Caco-2 (cell line): ENCODE measurements at regions of chr5 and their contacts with region 1.

Region 1: DNA sequence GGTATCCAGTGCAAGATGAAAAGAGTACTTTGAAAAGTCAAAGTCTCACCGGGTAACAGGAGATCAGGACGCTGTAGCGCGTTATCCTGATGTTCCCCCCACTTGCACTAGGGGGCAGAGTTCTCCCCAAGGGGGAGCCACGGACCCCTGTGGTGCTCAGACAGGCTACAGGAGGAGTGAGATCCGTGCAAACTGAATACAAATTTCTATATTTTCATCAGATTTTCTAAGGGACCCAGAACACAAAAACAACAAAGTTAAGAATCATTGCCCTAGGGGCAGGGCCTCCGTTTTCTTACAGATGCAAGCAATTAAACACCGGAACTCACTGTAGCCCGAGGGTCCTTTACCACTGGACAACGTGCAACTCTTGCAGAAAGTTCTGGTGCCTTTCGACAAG is 2.0 kb downstream of the MYO10 start:
- DNase-seq: peak; percentile 77 to 87
- H3K4me3 ChIP-seq: peak overlapping the region; percentile 97
- H3K4me3 Mint-ChIP-seq: peak overlapping the region; percentile 90
- H3K27ac Mint-ChIP-seq: no peak overlapping the region
- H3K4me1 ChIP-seq: peaks cover 28% of the 10 kb centered on the region
- H3K4me1 Mint-ChIP-seq: peaks cover 30% of the 10 kb centered on the region
- H3K27me3 ChIP-seq: no peaks in the 10 kb centered on the region
- H3K27me3 Mint-ChIP-seq: no peaks in the 10 kb centered on the region
- CTCF ChIP-seq: peak; percentile 97 to 98

Region 2: DNA sequence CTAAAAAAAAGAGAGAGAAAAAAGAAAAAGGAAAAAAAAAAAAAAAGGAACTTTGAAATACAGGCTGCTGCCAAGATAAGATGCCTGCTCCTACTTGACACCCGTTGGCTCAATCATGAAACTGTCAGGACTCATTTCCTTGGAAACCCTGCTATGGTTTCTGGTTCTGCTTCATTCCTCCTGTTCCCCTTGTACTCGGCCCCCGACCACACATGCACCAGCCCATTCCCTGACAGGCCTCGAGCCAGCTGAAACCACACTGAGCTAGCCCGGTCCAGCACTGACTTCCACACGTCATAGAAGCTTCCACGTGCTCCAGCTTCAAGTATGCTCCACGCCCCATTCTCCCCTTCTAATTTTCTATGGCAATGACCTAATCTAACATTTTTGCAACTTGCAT is 91.2 kb before region 1 on chr5:
- CTCF ChIA-PET with region 1: interaction called, 3 read pairs
- POLR2A ChIA-PET with region 1: no interaction called
- intact Hi-C with region 1: loop called (anchors 1 kb)
- DNase-seq: no peak
- H3K4me3 ChIP-seq: no peak overlapping the region
- H3K4me3 Mint-ChIP-seq: no peak overlapping the region
- H3K27ac Mint-ChIP-seq: no peak overlapping the region
- H3K4me1 ChIP-seq: no peaks in the 10 kb centered on the region
- H3K4me1 Mint-ChIP-seq: peaks cover 17% of the 10 kb centered on the region
- H3K27me3 ChIP-seq: no peaks in the 10 kb centered on the region
- H3K27me3 Mint-ChIP-seq: no peaks in the 10 kb centered on the region
- CTCF ChIP-seq: no peak

Region 3: GRCh38 chr5:16894236-16895057 is 39.7 kb before region 1 on chr5:
- CTCF ChIA-PET with region 1: no interaction called
- POLR2A ChIA-PET with region 1: interaction called, 3 read pairs
- intact Hi-C with region 1: loop called (anchors 1 kb)
- DNase-seq: peak; percentile 81 to 87
- H3K4me3 ChIP-seq: peak overlapping the region; percentile 5; the same call in 1 of the 2 replicates
- H3K4me3 Mint-ChIP-seq: peak overlapping the region; percentile 66
- H3K27ac Mint-ChIP-seq: peak overlapping the region; percentile 88
- H3K4me1 ChIP-seq: peaks cover 90% of the 10 kb centered on the region
- H3K4me1 Mint-ChIP-seq: peaks cover 70% of the 10 kb centered on the region
- H3K27me3 ChIP-seq: no peaks in the 10 kb centered on the region
- H3K27me3 Mint-ChIP-seq: no peaks in the 10 kb centered on the region
- CTCF ChIP-seq: no peak

Region 4: GRCh38 chr5:16965581-16965980 is 31.5 kb after region 1 on chr5:
- CTCF ChIA-PET with region 1: no interaction called
- POLR2A ChIA-PET with region 1: no interaction called
- intact Hi-C with region 1: loop called (anchors 1 kb)
- DNase-seq: no peak
- H3K4me3 ChIP-seq: no peak overlapping the region
- H3K4me3 Mint-ChIP-seq: peak overlapping the region; percentile 29
- H3K27ac Mint-ChIP-seq: peak overlapping the region; percentile 55
- H3K4me1 ChIP-seq: peaks cover 10% of the 10 kb centered on the region; the same call in 1 of the 2 replicates
- H3K4me1 Mint-ChIP-seq: peaks cover 6% of the 10 kb centered on the region
- H3K27me3 ChIP-seq: no peaks in the 10 kb centered on the region
- H3K27me3 Mint-ChIP-seq: no peaks in the 10 kb centered on the region
- CTCF ChIP-seq: no peak

Region 5: DNA sequence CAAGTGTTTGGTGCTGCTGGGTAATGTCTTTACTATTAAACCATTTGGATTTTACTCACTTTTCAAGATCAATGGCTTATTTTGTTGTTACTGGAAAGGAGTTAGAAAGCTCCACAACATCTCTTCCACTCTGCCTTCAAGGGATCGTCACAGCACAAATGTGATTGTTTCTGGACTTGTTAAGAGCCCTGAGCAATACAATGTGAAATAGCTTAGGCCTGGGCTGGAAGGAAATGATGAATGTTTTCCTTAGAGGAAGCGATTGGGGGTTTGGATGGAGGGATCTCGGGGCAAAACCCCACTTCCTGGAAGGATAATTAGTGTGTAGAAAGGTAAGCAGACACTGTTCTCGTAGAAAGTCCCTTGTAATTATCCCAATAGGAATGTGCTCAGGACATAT is 61.2 kb after region 1 on chr5:
- CTCF ChIA-PET with region 1: no interaction called
- POLR2A ChIA-PET with region 1: interaction called, 4 read pairs
- intact Hi-C with region 1: loop called (anchors 5 kb)
- DNase-seq: no peak
- H3K4me3 ChIP-seq: no peak overlapping the region
- H3K4me3 Mint-ChIP-seq: peak overlapping the region; percentile 48
- H3K27ac Mint-ChIP-seq: peak overlapping the region; percentile 60
- H3K4me1 ChIP-seq: peaks cover 16% of the 10 kb centered on the region; the same call in 1 of the 2 replicates
- H3K4me1 Mint-ChIP-seq: peaks cover 29% of the 10 kb centered on the region
- H3K27me3 ChIP-seq: no peaks in the 10 kb centered on the region
- H3K27me3 Mint-ChIP-seq: no peaks in the 10 kb centered on the region
- CTCF ChIP-seq: no peak

Region 6: DNA sequence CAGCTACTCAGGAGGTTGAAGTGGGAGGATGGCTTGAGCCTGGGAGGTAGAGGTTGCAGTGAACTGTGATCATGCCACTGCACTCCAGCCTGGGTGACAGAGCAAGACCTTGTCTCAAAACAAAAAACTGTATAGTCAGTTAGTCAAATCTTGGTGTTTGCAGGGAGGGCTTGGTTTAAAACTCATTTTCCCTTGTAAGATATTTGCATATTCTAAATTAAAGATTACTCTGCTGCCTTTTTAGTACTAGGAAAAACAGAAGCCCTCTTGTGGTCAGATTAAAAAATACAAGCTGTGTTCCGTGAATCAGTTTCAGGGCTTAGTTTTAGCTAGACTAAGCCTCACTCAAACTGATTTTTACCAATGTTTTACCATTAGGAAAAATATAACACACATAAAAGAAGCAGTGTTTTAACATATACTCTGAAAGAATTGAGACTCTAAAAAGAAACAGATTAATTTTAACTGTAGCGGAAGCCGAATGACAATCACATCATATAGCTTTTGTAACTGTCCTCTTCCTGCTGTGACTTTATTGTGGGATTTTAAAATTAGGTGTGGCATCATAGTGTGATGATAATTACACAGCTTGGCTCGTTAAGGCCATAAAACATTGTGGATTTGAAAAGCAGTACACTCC is 198.4 kb after region 1 on chr5:
- CTCF ChIA-PET with region 1: interaction called, 13 read pairs
- POLR2A ChIA-PET with region 1: interaction called, 5 read pairs
- intact Hi-C with region 1: loop called (anchors 1 kb)
- DNase-seq: peak in 1 of 2 experiments; percentile 45
- H3K4me3 ChIP-seq: no peak overlapping the region
- H3K4me3 Mint-ChIP-seq: no peak overlapping the region
- H3K27ac Mint-ChIP-seq: no peak overlapping the region
- H3K4me1 ChIP-seq: no peaks in the 10 kb centered on the region
- H3K4me1 Mint-ChIP-seq: peaks cover 9% of the 10 kb centered on the region
- H3K27me3 ChIP-seq: no peaks in the 10 kb centered on the region
- H3K27me3 Mint-ChIP-seq: no peaks in the 10 kb centered on the region
- CTCF ChIP-seq: peak; percentile 49 to 76

Region 7: DNA sequence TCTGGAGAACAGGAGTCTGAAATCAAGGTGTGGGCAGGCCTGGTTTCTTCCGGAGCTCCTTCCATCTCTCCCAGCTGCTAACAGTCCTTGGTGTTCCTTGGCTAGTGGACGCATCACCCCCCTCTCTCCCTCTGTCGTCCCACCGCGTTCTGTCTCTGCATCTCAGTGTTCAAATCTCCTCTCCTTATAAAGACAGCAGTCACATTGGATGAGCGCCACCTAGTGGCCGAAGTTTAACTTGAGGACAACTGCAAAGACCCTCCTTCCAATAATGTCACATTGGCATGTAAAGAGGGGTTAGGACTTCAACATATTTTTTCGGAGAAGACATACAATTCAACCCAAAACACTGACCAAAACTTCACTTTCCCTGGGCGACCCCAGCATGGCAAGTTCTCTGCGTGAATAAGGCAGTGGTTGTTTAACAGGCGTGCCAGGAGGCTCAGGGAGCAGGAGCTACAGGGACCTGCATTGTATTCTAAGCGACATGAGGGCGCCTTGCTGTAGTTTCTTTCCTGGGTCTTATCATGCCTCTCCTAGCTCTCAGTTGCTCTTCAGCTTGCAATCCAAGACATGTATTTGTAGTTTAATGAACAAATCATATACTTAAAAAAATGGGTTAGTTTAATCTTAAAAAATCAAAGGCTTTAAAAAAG is 255.4 kb after region 1 on chr5:
- CTCF ChIA-PET with region 1: interaction called, 12 read pairs
- POLR2A ChIA-PET with region 1: interaction called, 4 read pairs
- intact Hi-C with region 1: loop called (anchors 1 kb)
- DNase-seq: peak; percentile 78 to 81
- H3K4me3 ChIP-seq: no peak overlapping the region
- H3K4me3 Mint-ChIP-seq: no peak overlapping the region
- H3K27ac Mint-ChIP-seq: peak overlapping the region; percentile 65
- H3K4me1 ChIP-seq: peaks cover 21% of the 10 kb centered on the region
- H3K4me1 Mint-ChIP-seq: peaks cover 28% of the 10 kb centered on the region
- H3K27me3 ChIP-seq: no peaks in the 10 kb centered on the region
- H3K27me3 Mint-ChIP-seq: no peaks in the 10 kb centered on the region
- CTCF ChIP-seq: peak; percentile 77 to 92